ENCODE measurements at regions of chr4 and their contacts with region 1.

Region 1: DNA sequence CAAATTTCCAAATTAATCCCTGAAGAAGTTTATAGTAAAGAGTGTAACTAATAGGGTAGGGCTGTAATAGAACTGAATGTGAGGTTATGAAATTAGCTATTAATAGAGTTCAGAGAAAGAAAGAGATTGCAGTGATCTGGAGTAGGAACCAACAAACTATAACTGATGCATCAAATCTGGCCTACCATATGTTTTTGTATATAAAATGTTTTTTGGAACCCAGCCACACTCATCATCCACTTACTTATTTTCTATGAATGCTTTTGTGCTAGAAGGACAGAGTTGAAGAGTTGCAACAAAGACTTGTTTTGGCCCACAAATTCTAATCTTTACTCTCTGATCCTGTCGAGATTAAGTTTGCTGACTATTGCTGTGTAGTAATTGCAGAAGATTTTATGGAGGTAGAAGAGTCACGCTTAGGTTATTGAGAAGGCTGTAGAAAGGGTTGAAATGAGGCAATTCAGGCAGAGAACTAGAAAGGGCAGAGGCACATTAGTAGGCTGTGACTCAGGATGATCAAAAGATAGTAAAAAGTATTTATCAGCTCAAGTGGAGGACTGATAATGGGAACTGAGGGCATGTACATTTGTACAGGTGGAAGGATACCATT is 298.7 kb upstream of the EMCN start:
- DNase-seq: no peak
- ATAC-seq: no peak
- H3K4me3 ChIP-seq: no peak overlapping the region
- H3K27ac ChIP-seq: no peak overlapping the region
- H3K4me1 ChIP-seq: no peaks in the 10 kb centered on the region
- H3K27me3 ChIP-seq: no peaks in the 10 kb centered on the region
- CTCF ChIP-seq: no peak

Region 2: GRCh38 chr4:100797791-100798190 is 18.8 kb before region 1 on chr4:
- CTCF ChIA-PET with region 1: interaction called, 13 read pairs
- POLR2A ChIA-PET with region 1: no interaction called
- in situ Hi-C with region 1: no loop called
- intact Hi-C with region 1: no loop called
- DNase-seq: no peak
- ATAC-seq: no peak
- H3K4me3 ChIP-seq: no peak overlapping the region
- H3K27ac ChIP-seq: no peak overlapping the region
- H3K4me1 ChIP-seq: no peaks in the 10 kb centered on the region
- H3K27me3 ChIP-seq: no peaks in the 10 kb centered on the region
- CTCF ChIP-seq: no peak

Region 3: GRCh38 chr4:101232074-101232776 is 415.7 kb after region 1 on chr4:
- CTCF ChIA-PET with region 1: no interaction called
- POLR2A ChIA-PET with region 1: no interaction called
- in situ Hi-C with region 1: no loop called
- intact Hi-C with region 1: no loop called
- DNase-seq: no peak
- ATAC-seq: no peak
- H3K4me3 ChIP-seq: no peak overlapping the region
- H3K27ac ChIP-seq: no peak overlapping the region
- H3K4me1 ChIP-seq: no peaks in the 10 kb centered on the region
- H3K27me3 ChIP-seq: no peaks in the 10 kb centered on the region
- CTCF ChIP-seq: no peak